ENCODE measurements at regions of chr2 and their contacts with region 1.

Region 1: GRCh38 chr2:85354286-85355072 is at the starts of genes ELMOD3 and RETSAT:
- DNase-seq: peak; percentile 98
- H3K4me3 ChIP-seq: peak within 1 kb of the TSS; percentile 65
- H3K27ac ChIP-seq: peak within 1 kb of the TSS; percentile 47
- H3K27me3 ChIP-seq: no peaks in the 10 kb centered on the region
- CTCF ChIP-seq: no peak
- polyA plus RNA-seq, gene ELMOD3: 17.2 and 17.8 TPM in 2 replicates
- polyA plus RNA-seq, gene RETSAT: 35.5 and 38.0 TPM in 2 replicates

Region 2: GRCh38 chr2:85053802-85054201 is 300.7 kb before region 1 on chr2:
- CTCF ChIA-PET with region 1: no interaction called
- POLR2A ChIA-PET with region 1: no interaction called
- DNase-seq: no peak
- H3K4me3 ChIP-seq: no peak overlapping the region
- H3K27ac ChIP-seq: no peak overlapping the region
- H3K27me3 ChIP-seq: no peaks in the 10 kb centered on the region
- CTCF ChIP-seq: no peak

Region 3: DNA sequence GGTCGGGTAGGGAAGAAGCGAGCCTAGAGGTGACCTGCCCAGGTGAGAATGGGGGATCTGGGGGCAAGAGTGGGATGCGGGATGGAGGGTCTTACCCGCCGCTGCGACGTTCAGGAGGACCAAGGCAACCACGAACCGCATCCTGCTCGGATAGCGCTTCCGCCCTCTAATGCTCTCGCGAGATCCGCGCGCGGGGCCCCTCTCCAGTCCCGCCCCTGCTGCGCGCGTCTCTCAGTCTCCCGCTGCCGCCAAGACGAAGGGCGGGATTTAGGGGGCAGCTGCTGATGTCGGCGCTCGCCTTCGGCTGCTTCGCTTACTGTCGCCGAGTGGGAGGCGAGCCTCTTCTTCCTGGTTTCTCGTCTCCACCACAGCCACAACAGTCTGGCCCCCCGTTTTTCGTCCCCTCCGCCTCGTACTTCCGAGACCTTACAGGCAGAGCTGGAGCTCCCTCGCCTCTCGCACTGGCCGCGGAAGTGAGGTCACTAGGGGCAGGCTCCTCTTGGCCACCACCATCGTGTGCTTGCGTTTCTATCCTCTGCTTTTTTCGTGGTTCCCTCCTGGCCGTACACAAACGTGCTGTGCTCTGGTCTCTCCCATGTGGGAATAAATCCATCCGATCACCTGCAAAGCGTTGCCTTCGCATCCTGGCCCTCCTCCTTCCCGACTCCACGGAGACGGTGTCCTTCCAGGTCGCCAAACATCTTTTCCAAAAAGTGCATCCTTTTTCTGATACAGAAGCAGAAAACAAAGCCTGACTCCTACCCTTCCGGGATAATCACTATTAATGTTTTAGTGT is 26.5 kb before region 1 on chr2 and contains the start of gene TGOLN2:
- CTCF ChIA-PET with region 1: no interaction called
- POLR2A ChIA-PET with region 1: interaction called, 12 read pairs
- DNase-seq: peak; percentile 66
- H3K4me3 ChIP-seq: peak within 1 kb of the TSS; percentile 82
- H3K27ac ChIP-seq: peak within 1 kb of the TSS; percentile 80
- H3K27me3 ChIP-seq: no peaks in the 10 kb centered on the region
- CTCF ChIP-seq: no peak; the same call in 1 of the 2 replicates
- polyA plus RNA-seq, gene TGOLN2: 121 and 155 TPM in 2 replicates